B cell (primary cell): ENCODE measurements at regions of chr5 and their contacts with region 1.

Region 1: DNA sequence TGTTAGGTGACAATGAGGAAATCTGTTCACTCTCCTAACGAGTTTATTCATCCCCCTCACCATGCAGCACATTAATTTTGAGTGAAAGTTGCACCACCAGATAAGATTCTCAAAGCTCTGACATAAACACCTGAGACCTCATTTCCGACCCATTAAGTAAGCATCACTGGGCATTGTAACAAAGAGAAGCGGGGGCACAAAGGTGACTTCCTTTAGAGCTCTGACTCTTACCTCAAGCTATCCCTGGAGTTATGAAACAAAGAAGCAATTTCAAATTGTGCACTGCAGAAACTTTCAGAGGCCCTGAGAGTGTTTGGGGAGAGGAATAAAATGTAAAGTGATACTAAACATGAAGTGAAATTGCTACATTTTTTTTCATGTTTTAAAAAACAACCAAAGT is 29.5 kb downstream of the C5orf15 start:
- DNase-seq: peak; percentile 67
- ATAC-seq: no peak
- H3K4me3 ChIP-seq: peak overlapping the region in 1 of 5 experiments; percentile 22
- H3K4me3 Mint-ChIP-seq: peak overlapping the region; percentile 30
- H3K27ac ChIP-seq: peak overlapping the region; percentile 93 to 99
- H3K27ac Mint-ChIP-seq: peak overlapping the region; percentile 99
- H3K4me1 ChIP-seq: peaks cover 84 to 96% of the 10 kb centered on the region in 2 donors
- H3K4me1 Mint-ChIP-seq: peaks cover 83% of the 10 kb centered on the region
- H3K27me3 ChIP-seq: no peaks in the 10 kb centered on the region
- H3K27me3 Mint-ChIP-seq: no peaks in the 10 kb centered on the region
- CTCF ChIP-seq: no peak

Region 2: GRCh38 chr5:133032852-133033742 is 905.8 kb before region 1 on chr5:
- CTCF ChIA-PET with region 1: interaction called, 3 read pairs
- POLR2A ChIA-PET with region 1: no interaction called
- intact Hi-C with region 1: loop called (anchors 5 kb)
- DNase-seq: peak; percentile 79
- ATAC-seq: peak; percentile 92
- H3K4me3 ChIP-seq: peak overlapping the region in 3 of 5 experiments; percentile 1 to 36 (median 2)
- H3K4me3 Mint-ChIP-seq: peak overlapping the region; percentile 81
- H3K27ac ChIP-seq: peak overlapping the region; percentile 90 to 94
- H3K27ac Mint-ChIP-seq: peak overlapping the region; percentile 97
- H3K4me1 ChIP-seq: peaks cover 57 to 69% of the 10 kb centered on the region in 2 donors
- H3K4me1 Mint-ChIP-seq: peaks cover 52% of the 10 kb centered on the region
- H3K27me3 ChIP-seq: no peaks in the 10 kb centered on the region
- H3K27me3 Mint-ChIP-seq: no peaks in the 10 kb centered on the region
- CTCF ChIP-seq: no peak

Region 3: GRCh38 chr5:133907075-133907474 is 31.9 kb before region 1 on chr5:
- CTCF ChIA-PET with region 1: interaction called, 62 read pairs
- POLR2A ChIA-PET with region 1: interaction called, 3 read pairs
- intact Hi-C with region 1: loop called (anchors 1 kb)
- DNase-seq: no peak
- ATAC-seq: no peak
- H3K4me3 ChIP-seq: no peak overlapping the region
- H3K4me3 Mint-ChIP-seq: no peak overlapping the region
- H3K27ac ChIP-seq: peak overlapping the region in 1 of 2 donors; percentile 56
- H3K27ac Mint-ChIP-seq: peak overlapping the region; percentile 50
- H3K4me1 ChIP-seq: peaks cover 0 to 12% of the 10 kb centered on the region in 2 donors
- H3K4me1 Mint-ChIP-seq: peaks cover 20% of the 10 kb centered on the region
- H3K27me3 ChIP-seq: no peaks in the 10 kb centered on the region
- H3K27me3 Mint-ChIP-seq: no peaks in the 10 kb centered on the region
- CTCF ChIP-seq: no peak

Region 4: GRCh38 chr5:134975078-134975715 is 1036.3 kb after region 1 on chr5:
- CTCF ChIA-PET with region 1: no interaction called
- POLR2A ChIA-PET with region 1: no interaction called
- intact Hi-C with region 1: no loop called
- DNase-seq: no peak
- ATAC-seq: no peak
- H3K4me3 ChIP-seq: no peak overlapping the region
- H3K4me3 Mint-ChIP-seq: no peak overlapping the region
- H3K27ac ChIP-seq: no peak overlapping the region
- H3K27ac Mint-ChIP-seq: no peak overlapping the region
- H3K4me1 ChIP-seq: no peaks in the 10 kb centered on the region
- H3K4me1 Mint-ChIP-seq: no peaks in the 10 kb centered on the region
- H3K27me3 ChIP-seq: no peaks in the 10 kb centered on the region
- H3K27me3 Mint-ChIP-seq: no peaks in the 10 kb centered on the region
- CTCF ChIP-seq: no peak